Heart left ventricle (tissue), 16 donors: ENCODE measurements at regions of chr16 and their contacts with region 1.

Region 1: DNA sequence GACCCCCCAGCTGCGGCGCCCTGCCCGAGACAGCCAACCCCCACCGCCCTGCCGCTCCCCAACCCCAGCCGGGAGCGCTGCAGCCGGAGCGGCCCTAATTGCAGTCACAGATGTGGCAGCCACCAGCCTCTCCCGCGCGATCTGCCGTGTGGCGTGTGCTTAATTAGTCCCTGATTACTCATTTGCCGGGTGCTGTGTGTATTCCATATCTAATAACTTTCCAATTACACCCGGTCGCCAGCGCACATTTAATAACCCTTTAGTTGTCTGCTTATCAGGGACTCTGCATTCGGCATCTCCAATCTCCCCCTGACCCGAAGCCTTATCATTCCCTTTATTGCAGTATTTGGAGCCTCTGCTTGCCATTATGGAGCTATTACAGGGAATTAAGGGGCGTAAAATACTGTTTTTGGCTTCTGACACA is 236.7 kb upstream of the CIBAR2 start:
- DNase-seq: peak in 1 of 5 donors; percentile 48
- ATAC-seq: no peak
- H3K4me3 ChIP-seq: no peak overlapping the region
- H3K27ac ChIP-seq: no peak overlapping the region
- H3K4me1 ChIP-seq: peaks cover 0 to 16% (median 2%) of the 10 kb centered on the region in 12 donors
- H3K27me3 ChIP-seq: no peaks in the 10 kb centered on the region
- CTCF ChIP-seq: no peak
- POLR2A ChIP-seq: no peak

Region 2: GRCh38 chr16:85114909-85115567 is 233.9 kb before region 1 on chr16:
- intact Hi-C with region 1: no loop called
- DNase-seq: peak; percentile 86 to 94 (median 88)
- ATAC-seq: peak; percentile 70 to 91 (median 86)
- H3K4me3 ChIP-seq: peak overlapping the region in 4 of 12 donors; percentile 23 to 40 (median 29)
- H3K27ac ChIP-seq: peak overlapping the region in 7 of 12 donors; percentile 23 to 60 (median 49)
- H3K4me1 ChIP-seq: peaks cover 0 to 9% (median 1%) of the 10 kb centered on the region in 12 donors
- H3K27me3 ChIP-seq: no peaks in the 10 kb centered on the region
- CTCF ChIP-seq: peak; percentile 85 to 99 (median 96)
- POLR2A ChIP-seq: no peak

Region 3: DNA sequence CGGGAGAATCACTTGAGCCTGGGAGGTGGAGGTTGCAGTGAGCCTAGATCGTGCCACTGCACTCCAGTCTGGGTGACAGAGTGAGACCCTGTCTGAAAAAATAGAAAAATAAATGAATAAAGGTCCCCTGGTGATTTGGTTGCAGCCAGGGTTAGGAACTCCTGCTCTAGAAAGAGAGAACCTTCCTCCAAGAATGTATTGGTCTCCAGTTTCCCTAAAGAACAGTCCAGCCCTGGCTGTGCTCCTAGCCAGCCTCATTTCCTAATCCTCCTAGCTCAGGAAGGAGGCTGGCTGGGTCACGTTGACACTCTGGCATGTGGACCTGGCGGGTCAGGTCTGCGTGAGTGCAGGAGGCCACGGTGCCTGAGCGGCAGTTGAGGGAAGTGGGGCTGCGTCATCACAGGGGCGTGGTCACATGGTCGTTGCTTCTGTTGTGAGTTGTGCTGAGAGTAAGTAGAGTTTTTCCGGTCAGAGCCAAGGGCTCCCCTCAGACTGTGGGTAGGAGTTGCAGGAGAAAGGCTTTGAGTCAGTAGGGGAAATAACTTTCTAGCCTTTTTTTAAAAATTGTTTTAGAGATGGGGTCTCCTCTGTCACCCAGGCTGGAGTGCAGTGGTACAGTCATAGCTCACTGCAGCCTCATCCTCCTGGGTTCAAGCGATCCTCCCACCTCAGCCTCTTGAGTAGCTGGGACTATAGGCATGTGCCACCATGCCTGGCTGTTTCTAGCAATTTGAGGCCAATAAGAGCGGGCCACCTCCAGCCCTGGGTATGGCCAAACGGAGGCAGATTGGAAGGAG is 42.7 kb before region 1 on chr16:
- intact Hi-C with region 1: loop called in 1 of 10 experiments (anchors 1 kb)
- DNase-seq: peak; percentile 79 to 91 (median 86)
- ATAC-seq: peak; percentile 47 to 85 (median 60)
- H3K4me3 ChIP-seq: no peak overlapping the region
- H3K27ac ChIP-seq: peak overlapping the region in 8 of 12 donors; percentile 20 to 71 (median 46)
- H3K4me1 ChIP-seq: peaks cover 7 to 78% (median 45%) of the 10 kb centered on the region in 12 donors
- H3K27me3 ChIP-seq: no peaks in the 10 kb centered on the region
- CTCF ChIP-seq: no peak
- POLR2A ChIP-seq: no peak